Calu3 (cell line): ENCODE measurements at regions of chr1 and their contacts with region 1.

Region 1: DNA sequence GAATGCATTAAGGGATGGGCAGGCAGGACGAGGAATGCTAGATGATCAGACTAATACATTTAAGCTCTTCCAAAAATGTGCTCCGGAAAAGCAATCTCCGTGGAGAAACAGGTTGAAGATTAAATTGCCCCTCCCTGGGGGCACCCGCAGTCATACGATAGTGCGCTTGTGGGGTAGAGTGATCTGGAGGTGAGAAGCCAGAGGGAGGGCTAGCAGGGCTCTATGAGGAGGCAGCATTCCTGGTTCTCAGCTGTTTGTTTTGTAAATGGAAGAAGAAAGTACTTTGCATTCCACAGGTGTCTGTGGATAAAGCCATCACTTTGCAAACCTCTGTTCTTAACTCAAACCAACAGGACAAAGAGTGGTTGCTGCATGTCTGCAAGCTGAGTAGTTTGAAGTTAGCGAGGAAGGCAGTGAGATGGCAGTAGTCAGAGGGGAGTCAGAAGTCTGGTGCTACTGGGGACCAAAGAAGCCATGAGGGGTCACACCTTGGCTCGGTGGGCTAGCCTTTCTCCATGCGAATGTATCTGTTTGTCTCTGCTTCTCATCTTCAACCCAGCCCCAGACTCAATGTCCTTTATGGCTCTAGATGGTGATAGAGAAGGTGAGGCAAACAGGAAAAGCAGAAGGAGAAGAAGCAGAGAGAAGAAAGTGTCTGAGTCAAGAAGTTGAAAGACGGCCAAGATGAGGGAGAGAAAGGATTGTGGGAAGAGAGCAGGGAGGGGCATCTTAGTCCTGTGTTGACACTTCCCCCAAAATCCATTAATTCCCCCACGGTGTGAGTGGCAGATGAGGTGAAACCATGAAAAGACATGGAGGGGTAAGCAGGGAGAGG is 65.2 kb upstream of the GJA8 start:
- DNase-seq: no peak
- H3K4me3 Mint-ChIP-seq: no peak overlapping the region
- H3K27ac Mint-ChIP-seq: no peak overlapping the region
- H3K4me1 Mint-ChIP-seq: peaks cover 27% of the 10 kb centered on the region
- H3K27me3 Mint-ChIP-seq: no peaks in the 10 kb centered on the region
- CTCF ChIP-seq: no peak

Region 2: DNA sequence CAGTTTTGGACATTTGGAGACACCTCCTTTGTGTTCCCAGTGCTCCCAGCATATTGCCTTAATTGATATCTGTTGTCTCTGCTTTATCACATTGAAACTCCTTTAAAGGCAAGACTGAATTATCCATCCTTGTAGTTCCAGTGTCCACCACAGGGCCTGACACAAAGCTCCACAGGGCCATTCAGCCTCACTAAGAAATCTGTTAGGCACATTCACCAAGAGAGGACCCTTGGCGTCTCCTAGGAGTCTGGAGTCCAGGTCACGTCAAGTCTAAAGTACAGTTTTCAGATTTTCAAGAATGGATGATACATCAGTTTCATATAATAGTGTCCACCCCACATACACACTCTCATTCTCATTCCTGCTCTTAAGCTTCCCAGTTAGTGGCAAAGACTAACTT is 171.8 kb before region 1 on chr1:
- CTCF ChIA-PET with region 1: no interaction called
- intact Hi-C with region 1: no loop called
- DNase-seq: peak; percentile 40
- H3K4me3 Mint-ChIP-seq: no peak overlapping the region
- H3K27ac Mint-ChIP-seq: peak overlapping the region; percentile 66
- H3K4me1 Mint-ChIP-seq: peaks cover 72% of the 10 kb centered on the region
- H3K27me3 Mint-ChIP-seq: no peaks in the 10 kb centered on the region
- CTCF ChIP-seq: peak; percentile 43

Region 3: DNA sequence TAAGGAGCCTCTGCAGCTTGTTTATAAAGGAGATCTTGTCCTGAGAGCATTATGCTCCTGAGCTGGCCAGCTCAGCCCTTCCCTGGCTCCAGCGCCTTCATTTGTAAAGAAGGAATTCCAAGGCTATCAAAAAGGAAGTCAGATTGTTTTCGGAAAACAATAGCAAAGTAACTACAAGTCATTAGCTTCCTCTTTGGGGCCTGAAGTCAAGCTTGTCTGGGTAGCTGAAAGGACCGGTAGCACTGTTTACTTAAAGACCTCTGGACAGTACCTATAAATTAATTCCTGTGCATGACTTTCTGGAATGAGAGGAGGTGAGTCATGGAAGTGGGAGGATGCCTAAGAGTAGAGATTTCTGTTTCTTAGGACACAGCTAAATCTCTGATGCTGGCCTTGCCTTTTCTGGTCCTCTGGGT is 56.3 kb before region 1 on chr1:
- CTCF ChIA-PET with region 1: no interaction called
- intact Hi-C with region 1: loop called (anchors 10 kb)
- DNase-seq: no peak
- H3K4me3 Mint-ChIP-seq: no peak overlapping the region
- H3K27ac Mint-ChIP-seq: no peak overlapping the region
- H3K4me1 Mint-ChIP-seq: peaks cover 10% of the 10 kb centered on the region
- H3K27me3 Mint-ChIP-seq: peaks cover 30% of the 10 kb centered on the region
- CTCF ChIP-seq: no peak

Region 4: GRCh38 chr1:148362626-148363438 is 525.5 kb after region 1 on chr1:
- CTCF ChIA-PET with region 1: no interaction called
- intact Hi-C with region 1: no loop called
- DNase-seq: peak; percentile 34
- H3K4me3 Mint-ChIP-seq: peak overlapping the region; percentile 69
- H3K27ac Mint-ChIP-seq: peak overlapping the region; percentile 50
- H3K4me1 Mint-ChIP-seq: peaks cover 27% of the 10 kb centered on the region
- H3K27me3 Mint-ChIP-seq: peaks cover 10% of the 10 kb centered on the region
- CTCF ChIP-seq: no peak